ENCODE measurements at regions of chr9 and their contacts with region 1.

Region 1: DNA sequence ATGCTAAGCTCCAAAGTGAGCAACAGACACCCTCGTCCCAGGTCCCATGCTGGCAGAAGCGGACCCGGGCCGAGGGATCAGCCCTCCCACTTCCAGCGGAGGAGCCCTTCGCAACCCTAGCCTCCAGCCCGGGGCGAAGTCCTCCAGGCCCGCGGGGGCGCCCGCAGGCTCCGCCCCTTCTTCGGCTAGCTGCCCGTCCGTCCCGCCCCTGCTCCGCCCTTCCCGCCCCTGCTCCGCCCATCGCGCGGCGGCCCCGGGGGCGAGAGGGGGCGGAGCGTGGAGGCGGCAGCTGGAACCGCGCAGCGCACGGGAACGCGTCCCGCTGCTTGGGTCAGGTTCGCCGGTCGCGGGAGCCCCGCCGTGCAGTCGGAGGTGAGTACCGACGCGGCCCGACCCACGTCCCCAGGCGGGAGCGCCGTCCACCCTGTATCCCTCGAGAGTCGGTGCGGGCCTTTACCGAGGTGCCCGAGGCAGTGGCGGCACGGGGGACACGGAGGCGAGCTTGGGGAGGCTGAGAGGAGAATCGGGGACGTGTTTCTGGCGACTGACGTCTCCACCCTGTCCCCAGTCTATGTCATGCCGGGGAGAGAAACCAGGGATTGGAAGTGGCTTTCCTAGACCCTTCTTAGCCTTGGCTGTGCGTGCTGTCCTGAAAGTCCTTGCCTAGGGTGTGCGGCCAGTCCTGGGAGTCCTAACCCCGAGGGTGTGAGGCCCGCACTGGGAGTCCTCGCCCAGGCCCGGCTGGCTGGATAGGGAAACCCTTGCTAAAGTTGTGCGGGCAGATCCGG is at the start of gene ACO1:
- DNase-seq: peak; percentile 73 to 94 (median 86)
- ATAC-seq: peak; percentile 96
- H3K4me3 ChIP-seq: peak within 1 kb of the TSS; percentile 93
- H3K4me3 Mint-ChIP-seq: peak within 1 kb of the TSS; percentile 91
- H3K27ac ChIP-seq: no peak within 1 kb of the TSS
- H3K27ac Mint-ChIP-seq: peak within 1 kb of the TSS; percentile 53
- H3K4me1 ChIP-seq: peaks cover 23% of the 10 kb centered on the region
- H3K4me1 Mint-ChIP-seq: peaks cover 23% of the 10 kb centered on the region
- H3K27me3 ChIP-seq: peaks cover 0 to 5% of the 10 kb centered on the region in 2 experiments
- H3K27me3 Mint-ChIP-seq: no peaks in the 10 kb centered on the region
- CTCF ChIP-seq: no peak
- total RNA-seq, gene ACO1: 3.1 TPM

Region 2: GRCh38 chr9:32264170-32264862 is 120.2 kb before region 1 on chr9:
- CTCF ChIA-PET with region 1: no interaction called
- POLR2A ChIA-PET with region 1: no interaction called
- intact Hi-C with region 1: no loop called
- DNase-seq: no peak
- ATAC-seq: no peak
- H3K4me3 ChIP-seq: no peak overlapping the region
- H3K4me3 Mint-ChIP-seq: no peak overlapping the region
- H3K27ac ChIP-seq: no peak overlapping the region
- H3K27ac Mint-ChIP-seq: no peak overlapping the region
- H3K4me1 ChIP-seq: no peaks in the 10 kb centered on the region
- H3K4me1 Mint-ChIP-seq: no peaks in the 10 kb centered on the region
- H3K27me3 ChIP-seq: no peaks in the 10 kb centered on the region
- H3K27me3 Mint-ChIP-seq: peaks cover 14% of the 10 kb centered on the region
- CTCF ChIP-seq: no peak

Region 3: DNA sequence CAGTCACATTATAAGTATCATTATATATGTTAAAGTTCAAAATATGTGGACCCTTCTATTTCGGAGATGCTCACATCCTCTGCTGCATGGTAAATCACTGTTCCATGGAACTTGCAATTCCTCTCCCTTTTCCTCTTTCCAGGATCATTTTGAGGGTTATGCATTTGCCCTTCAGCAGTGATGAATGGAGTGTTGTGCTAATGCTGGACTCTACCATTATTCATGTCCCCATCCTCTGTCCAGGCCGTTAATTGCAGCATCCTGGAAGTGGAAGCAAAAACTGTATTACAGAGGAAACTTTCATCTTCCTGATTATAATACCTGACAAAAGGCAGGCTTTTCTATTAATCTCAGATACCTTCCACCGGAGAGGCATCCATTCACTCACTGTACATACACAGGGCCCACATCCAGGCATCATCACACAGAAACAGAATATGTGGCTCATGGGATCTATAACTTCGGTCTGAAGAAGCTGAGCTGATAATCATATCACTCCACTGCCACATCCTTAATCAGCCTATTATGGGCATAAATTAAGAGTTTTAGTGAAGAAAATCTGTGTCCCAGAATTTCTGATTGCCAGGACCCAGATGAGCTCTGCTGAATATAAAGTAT is 65.1 kb before region 1 on chr9:
- CTCF ChIA-PET with region 1: no interaction called
- POLR2A ChIA-PET with region 1: no interaction called
- intact Hi-C with region 1: no loop called
- DNase-seq: no peak
- ATAC-seq: no peak
- H3K4me3 ChIP-seq: no peak overlapping the region
- H3K4me3 Mint-ChIP-seq: no peak overlapping the region
- H3K27ac ChIP-seq: no peak overlapping the region
- H3K27ac Mint-ChIP-seq: no peak overlapping the region
- H3K4me1 ChIP-seq: no peaks in the 10 kb centered on the region
- H3K4me1 Mint-ChIP-seq: no peaks in the 10 kb centered on the region
- H3K27me3 ChIP-seq: no peaks in the 10 kb centered on the region
- H3K27me3 Mint-ChIP-seq: peaks cover 9% of the 10 kb centered on the region
- CTCF ChIP-seq: no peak

Region 4: DNA sequence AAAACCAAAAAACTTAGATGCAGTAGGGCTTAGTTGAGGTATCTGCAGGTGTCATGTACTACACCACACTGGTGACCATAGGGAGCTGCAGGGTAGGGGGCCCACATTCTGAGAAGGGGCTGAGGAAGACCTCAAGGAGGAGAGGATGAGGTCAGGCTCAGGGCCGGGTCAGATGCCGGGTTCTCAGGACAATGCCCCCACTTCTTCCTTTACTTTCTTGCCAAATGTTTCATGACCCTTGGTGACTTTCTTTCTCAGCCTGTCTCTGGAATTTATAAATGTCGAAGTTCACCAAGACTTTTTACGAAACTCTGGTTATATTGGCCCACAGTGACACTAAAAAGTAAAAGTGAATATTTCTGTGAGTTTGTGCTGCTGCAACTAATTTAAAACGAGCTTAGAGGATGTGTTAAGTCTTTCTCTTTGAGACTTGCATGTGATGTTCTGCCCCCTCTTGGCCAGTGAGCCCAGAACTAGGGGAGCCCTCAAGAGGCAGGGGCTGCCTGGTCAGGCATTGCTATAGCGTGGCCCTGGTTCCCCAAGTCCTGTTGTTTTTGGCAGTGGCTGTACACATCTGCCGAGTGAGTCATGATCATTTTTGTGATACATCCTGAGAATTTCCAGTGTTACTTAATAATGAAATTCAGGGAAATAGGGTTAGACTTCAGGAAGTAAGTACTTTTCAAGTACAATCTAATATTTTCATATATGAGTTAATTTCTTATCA is 11.1 kb after region 1 on chr9:
- CTCF ChIA-PET with region 1: interaction called, 4 read pairs
- POLR2A ChIA-PET with region 1: no interaction called
- intact Hi-C with region 1: loop called in 1 of 2 experiments (anchors 1 kb)
- DNase-seq: peak in 1 of 14 experiments; percentile 16
- ATAC-seq: no peak
- H3K4me3 ChIP-seq: no peak overlapping the region
- H3K4me3 Mint-ChIP-seq: no peak overlapping the region
- H3K27ac ChIP-seq: no peak overlapping the region
- H3K27ac Mint-ChIP-seq: no peak overlapping the region
- H3K4me1 ChIP-seq: no peaks in the 10 kb centered on the region
- H3K4me1 Mint-ChIP-seq: no peaks in the 10 kb centered on the region
- H3K27me3 ChIP-seq: no peaks in the 10 kb centered on the region
- H3K27me3 Mint-ChIP-seq: no peaks in the 10 kb centered on the region
- CTCF ChIP-seq: no peak

Region 5: DNA sequence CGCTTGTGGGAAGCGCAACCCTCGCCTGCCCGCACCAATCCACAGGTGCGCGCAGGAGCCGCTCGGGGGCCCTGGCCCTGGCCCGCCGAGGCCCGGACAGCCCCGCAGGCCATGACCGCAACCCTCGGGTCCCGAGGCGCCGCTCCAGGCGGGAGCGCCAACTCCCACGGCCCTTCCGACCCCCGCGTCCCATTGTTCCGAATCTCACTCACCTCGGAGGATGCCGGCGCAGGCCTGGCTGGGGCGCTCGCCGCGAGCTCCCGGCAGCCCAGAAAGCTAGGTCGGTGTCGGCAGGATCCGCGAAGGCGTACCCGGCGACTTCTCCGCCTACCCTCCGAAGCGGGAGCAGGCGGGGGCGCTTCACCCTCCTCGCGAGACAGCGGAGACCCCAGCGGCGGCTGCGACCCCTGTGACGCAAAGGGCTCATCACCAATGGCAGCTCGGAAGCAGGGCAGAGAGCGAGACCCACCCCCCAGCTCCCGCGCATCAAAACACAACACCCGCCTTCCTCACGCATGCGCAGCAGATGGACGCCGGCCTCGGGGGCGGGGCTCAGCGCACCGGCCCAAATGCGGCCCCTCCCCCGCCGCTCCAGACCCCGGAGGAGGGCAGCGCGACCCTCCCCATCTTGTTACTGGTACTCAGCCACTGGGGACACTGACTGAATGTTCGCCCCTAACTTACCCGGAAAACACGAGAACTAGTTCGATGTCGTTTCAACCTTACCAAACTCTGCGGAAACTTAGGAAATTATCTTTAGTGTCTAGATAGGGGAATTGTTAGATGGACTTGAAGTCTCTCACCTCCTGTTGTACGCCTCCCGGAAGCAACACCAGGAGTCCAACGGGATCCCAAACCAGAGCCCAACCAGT is 166.2 kb after region 1 on chr9:
- CTCF ChIA-PET with region 1: interaction called, 23 read pairs
- POLR2A ChIA-PET with region 1: interaction called, 33 read pairs
- intact Hi-C with region 1: loop called in 1 of 2 experiments (anchors 1 kb)
- DNase-seq: peak; percentile 92 to 98 (median 95)
- ATAC-seq: peak; percentile 80
- H3K4me3 ChIP-seq: peak overlapping the region; percentile 86
- H3K4me3 Mint-ChIP-seq: peak overlapping the region; percentile 95
- H3K27ac ChIP-seq: peak overlapping the region; percentile 96 to 97
- H3K27ac Mint-ChIP-seq: peak overlapping the region; percentile 99
- H3K4me1 ChIP-seq: peaks cover 30% of the 10 kb centered on the region
- H3K4me1 Mint-ChIP-seq: peaks cover 60% of the 10 kb centered on the region
- H3K27me3 ChIP-seq: no peaks in the 10 kb centered on the region
- H3K27me3 Mint-ChIP-seq: no peaks in the 10 kb centered on the region
- CTCF ChIP-seq: peak; percentile 50

Region 6: GRCh38 chr9:32571969-32572899 is 187.7 kb after region 1 on chr9:
- CTCF ChIA-PET with region 1: interaction called, 206 read pairs
- POLR2A ChIA-PET with region 1: interaction called, 40 read pairs
- intact Hi-C with region 1: loop called in 1 of 2 experiments (anchors 1 kb)
- DNase-seq: peak; percentile 44 to 92 (median 68)
- ATAC-seq: peak; percentile 84
- H3K4me3 ChIP-seq: peak overlapping the region; percentile 74
- H3K4me3 Mint-ChIP-seq: peak overlapping the region; percentile 99
- H3K27ac ChIP-seq: peak overlapping the region; percentile 74 to 87
- H3K27ac Mint-ChIP-seq: peak overlapping the region; percentile 97
- H3K4me1 ChIP-seq: peaks cover 5% of the 10 kb centered on the region
- H3K4me1 Mint-ChIP-seq: peaks cover 42% of the 10 kb centered on the region
- H3K27me3 ChIP-seq: no peaks in the 10 kb centered on the region
- H3K27me3 Mint-ChIP-seq: no peaks in the 10 kb centered on the region
- CTCF ChIP-seq: peak; percentile 81

Region 7: DNA sequence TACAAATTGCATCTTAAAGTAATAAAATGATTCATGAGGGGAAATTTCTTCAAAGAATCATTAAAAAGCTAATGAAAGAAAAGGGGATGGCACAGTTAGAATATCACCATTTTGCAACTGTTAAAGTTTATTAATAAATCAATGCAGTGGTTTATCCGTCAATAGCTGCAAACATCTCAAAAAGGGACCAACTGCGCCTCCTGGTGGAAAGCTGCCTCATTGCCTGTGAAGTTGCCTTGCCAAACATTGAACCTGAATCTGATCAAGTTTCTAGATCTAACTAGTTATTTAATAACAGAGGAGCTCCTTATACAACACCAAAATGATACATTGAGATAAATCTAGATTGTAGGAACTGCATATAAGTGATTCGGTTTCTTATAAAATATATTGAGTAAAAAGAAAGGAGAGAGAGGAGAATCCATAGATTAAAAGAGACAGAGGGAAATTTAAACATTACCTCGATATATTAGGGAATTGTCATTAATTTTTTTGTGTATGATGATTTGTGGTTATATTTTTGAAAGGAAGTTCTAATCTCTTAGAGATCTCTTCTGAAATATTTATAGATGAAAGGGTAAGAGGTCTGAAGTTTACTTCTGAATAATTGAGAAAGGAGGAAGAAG is 195.3 kb after region 1 on chr9:
- CTCF ChIA-PET with region 1: interaction called, 206 read pairs
- POLR2A ChIA-PET with region 1: interaction called, 40 read pairs
- intact Hi-C with region 1: loop called (anchors 1 kb)
- DNase-seq: peak; percentile 68 to 88 (median 77)
- ATAC-seq: peak; percentile 69
- H3K4me3 ChIP-seq: no peak overlapping the region
- H3K4me3 Mint-ChIP-seq: no peak overlapping the region
- H3K27ac ChIP-seq: no peak overlapping the region
- H3K27ac Mint-ChIP-seq: no peak overlapping the region
- H3K4me1 ChIP-seq: no peaks in the 10 kb centered on the region
- H3K4me1 Mint-ChIP-seq: no peaks in the 10 kb centered on the region
- H3K27me3 ChIP-seq: no peaks in the 10 kb centered on the region
- H3K27me3 Mint-ChIP-seq: peaks cover 34% of the 10 kb centered on the region
- CTCF ChIP-seq: peak; percentile 98

Region 8: GRCh38 chr9:33264473-33265177 is 880.1 kb after region 1 on chr9 and contains the starts of genes BAG1 and CHMP5:
- CTCF ChIA-PET with region 1: no interaction called
- POLR2A ChIA-PET with region 1: no interaction called
- intact Hi-C with region 1: loop called in 1 of 2 experiments (anchors 10 kb)
- DNase-seq: peak; percentile 99 to 100 (median 100)
- ATAC-seq: peak; percentile 96
- H3K4me3 ChIP-seq: peak within 1 kb of the TSS; percentile 94
- H3K4me3 Mint-ChIP-seq: peak within 1 kb of the TSS; percentile 96
- H3K27ac ChIP-seq: peak within 1 kb of the TSS; percentile 59 to 86
- H3K27ac Mint-ChIP-seq: peak within 1 kb of the TSS; percentile 91
- H3K4me1 ChIP-seq: peaks cover 31% of the 10 kb centered on the region
- H3K4me1 Mint-ChIP-seq: peaks cover 63% of the 10 kb centered on the region
- H3K27me3 ChIP-seq: no peaks in the 10 kb centered on the region
- H3K27me3 Mint-ChIP-seq: no peaks in the 10 kb centered on the region
- CTCF ChIP-seq: no peak
- total RNA-seq, gene BAG1: 58.0 to 61.4 TPM
- total RNA-seq, gene CHMP5: 17.4 to 18.6 TPM

Region 9: GRCh38 chr9:34072868-34073590 is 1688.5 kb after region 1 on chr9:
- CTCF ChIA-PET with region 1: no interaction called
- POLR2A ChIA-PET with region 1: no interaction called
- intact Hi-C with region 1: no loop called
- DNase-seq: no peak
- ATAC-seq: no peak
- H3K4me3 ChIP-seq: no peak overlapping the region
- H3K4me3 Mint-ChIP-seq: no peak overlapping the region
- H3K27ac ChIP-seq: no peak overlapping the region
- H3K27ac Mint-ChIP-seq: no peak overlapping the region
- H3K4me1 ChIP-seq: peaks cover 3% of the 10 kb centered on the region
- H3K4me1 Mint-ChIP-seq: no peaks in the 10 kb centered on the region
- H3K27me3 ChIP-seq: no peaks in the 10 kb centered on the region
- H3K27me3 Mint-ChIP-seq: no peaks in the 10 kb centered on the region
- CTCF ChIP-seq: no peak

Measured in CD4-positive, alpha-beta T cell (primary cell).